ENCODE measurements at regions of chr11 and their contacts with region 1.

Region 1: DNA sequence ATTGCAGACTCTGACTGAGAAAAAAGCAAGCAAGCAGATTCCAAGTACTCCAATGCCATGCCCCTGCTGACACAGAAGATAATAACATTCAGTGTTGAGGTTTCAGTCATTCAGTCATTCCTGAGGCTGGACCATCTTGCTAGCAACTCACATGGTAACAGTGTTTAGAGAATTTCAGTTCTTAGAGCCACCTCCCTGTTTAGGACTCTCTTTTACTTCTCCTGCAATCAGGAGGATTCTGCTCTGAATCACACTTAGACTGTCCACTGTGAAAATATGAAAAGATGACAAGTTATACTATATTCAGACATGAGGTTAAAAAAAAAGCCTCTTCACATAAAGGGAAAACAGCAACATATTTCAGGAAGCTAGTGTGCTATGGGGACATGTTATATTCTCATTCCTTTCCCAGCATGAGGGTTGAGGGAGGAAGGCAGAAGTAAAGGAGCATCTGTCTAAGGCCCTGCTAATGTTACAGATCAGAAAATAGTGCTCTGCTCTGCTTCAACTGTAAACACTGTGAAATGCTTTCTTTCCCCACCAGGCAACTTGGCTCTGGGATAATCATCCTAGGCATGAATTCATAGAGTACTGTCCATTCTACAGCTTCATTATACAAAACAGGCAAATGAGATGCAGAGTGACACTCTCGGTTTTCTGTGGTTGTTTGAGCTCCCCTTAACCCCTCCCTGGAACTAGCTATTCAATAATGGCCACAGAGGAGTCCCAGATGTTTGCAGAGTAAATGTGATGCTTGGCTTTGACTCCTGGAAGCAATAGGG is 184.1 kb upstream of the CTSC start:
- DNase-seq: peak; percentile 34
- ATAC-seq: peak; percentile 74
- H3K4me3 ChIP-seq: no peak overlapping the region
- H3K27ac ChIP-seq: no peak overlapping the region
- H3K4me1 ChIP-seq: peaks cover 15% of the 10 kb centered on the region
- H3K27me3 ChIP-seq: no peaks in the 10 kb centered on the region
- CTCF ChIP-seq: no peak
- POLR2A ChIP-seq: no peak
- RAD21 ChIP-seq: no peak

Region 2: DNA sequence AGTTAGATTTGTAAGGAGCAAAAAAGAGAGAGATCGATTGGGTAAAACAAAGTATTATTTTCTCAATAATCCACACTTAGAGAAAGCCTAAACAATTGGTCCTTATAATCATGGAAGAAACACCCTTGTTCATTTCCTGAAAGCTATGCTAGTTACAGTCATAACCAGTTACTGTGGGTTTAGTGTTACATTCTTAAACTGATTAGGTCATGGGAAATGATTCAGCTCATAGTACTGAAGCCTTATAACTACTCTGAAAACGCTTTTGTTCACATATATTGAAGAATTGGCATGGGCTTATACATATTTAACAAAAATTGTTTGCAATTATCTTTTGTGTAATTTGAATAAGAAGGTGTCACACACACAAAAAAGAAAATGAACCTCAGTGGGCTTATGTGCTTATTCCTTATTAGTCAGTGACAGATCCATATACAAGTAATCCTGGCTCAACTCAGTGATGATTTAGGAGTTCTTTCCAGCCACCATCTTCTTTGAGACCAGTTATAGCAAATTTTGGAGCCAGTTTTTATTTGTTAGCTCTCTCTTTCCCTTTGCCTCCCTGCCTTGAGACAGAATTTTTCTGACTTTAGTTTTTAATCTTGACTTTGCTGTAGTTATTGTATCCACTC is 14.4 kb after region 1 on chr11:
- CTCF ChIA-PET with region 1: interaction called, 3 read pairs
- POLR2A ChIA-PET with region 1: no interaction called
- dilution Hi-C with region 1: no loop called
- in situ Hi-C with region 1: no loop called
- intact Hi-C with region 1: loop called (anchors 2 kb)
- DNase-seq: peak; percentile 92
- ATAC-seq: peak; percentile 97
- H3K4me3 ChIP-seq: no peak overlapping the region
- H3K27ac ChIP-seq: peak overlapping the region; percentile 97
- H3K4me1 ChIP-seq: peaks cover 8% of the 10 kb centered on the region
- H3K27me3 ChIP-seq: no peaks in the 10 kb centered on the region
- CTCF ChIP-seq: no peak
- POLR2A ChIP-seq: no peak
- RAD21 ChIP-seq: no peak